Activated CD4-positive, alpha-beta T cell treated with anti-CD3 and anti-CD28 coated beads for 36 hours (primary cell): ENCODE measurements at regions of chr7 and their contacts with region 1.

Region 1: GRCh38 chr7:143214789-143215679 is 6.8 kb upstream of the TAS2R40 start:
- DNase-seq: peak; percentile 70
- ATAC-seq: peak; percentile 89
- H3K4me3 Mint-ChIP-seq: no peak overlapping the region
- H3K27ac Mint-ChIP-seq: no peak overlapping the region
- H3K4me1 Mint-ChIP-seq: no peaks in the 10 kb centered on the region
- H3K27me3 Mint-ChIP-seq: peaks cover 2% of the 10 kb centered on the region

Region 2: DNA sequence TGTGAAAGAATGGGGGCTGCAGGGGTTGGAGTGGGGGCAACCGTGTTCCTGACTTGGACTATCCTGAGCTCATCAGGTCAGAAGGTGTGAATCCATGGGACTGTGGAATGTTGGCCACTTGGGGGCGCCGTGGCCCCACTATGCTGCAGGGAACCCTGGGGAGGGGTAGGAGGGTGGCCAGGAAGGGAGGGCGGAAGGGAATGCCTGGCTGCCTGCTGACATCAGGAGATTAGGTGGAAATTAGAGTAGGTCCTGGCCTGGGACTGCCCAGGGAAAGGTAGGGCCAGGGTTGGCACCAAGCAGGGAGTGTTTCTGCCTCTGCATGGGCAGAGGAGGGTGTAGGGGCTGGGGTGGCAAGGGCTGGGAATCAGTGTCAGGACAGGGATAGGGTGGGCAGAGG is 891.3 kb before region 1 on chr7:
- CTCF ChIA-PET with region 1: no interaction called
- POLR2A ChIA-PET with region 1: no interaction called
- intact Hi-C with region 1: loop called in 1 of 2 experiments (anchors 10 kb)
- DNase-seq: peak; percentile 73
- ATAC-seq: peak; percentile 56
- H3K4me3 Mint-ChIP-seq: peak overlapping the region; percentile 6
- H3K27ac Mint-ChIP-seq: no peak overlapping the region
- H3K4me1 Mint-ChIP-seq: peaks cover 25% of the 10 kb centered on the region
- H3K27me3 Mint-ChIP-seq: peaks cover 2% of the 10 kb centered on the region

Region 3: GRCh38 chr7:142603870-142604448 is 611.1 kb before region 1 on chr7:
- CTCF ChIA-PET with region 1: interaction called, 9 read pairs
- POLR2A ChIA-PET with region 1: no interaction called
- intact Hi-C with region 1: loop called (anchors 10 kb)
- DNase-seq: peak; percentile 69
- ATAC-seq: peak; percentile 60
- H3K4me3 Mint-ChIP-seq: peak overlapping the region; percentile 31
- H3K27ac Mint-ChIP-seq: peak overlapping the region; percentile 67
- H3K4me1 Mint-ChIP-seq: peaks cover 23% of the 10 kb centered on the region
- H3K27me3 Mint-ChIP-seq: peaks cover 3% of the 10 kb centered on the region

Region 4: GRCh38 chr7:142873281-142873787 is 341.7 kb before region 1 on chr7:
- CTCF ChIA-PET with region 1: interaction called, 11 read pairs
- POLR2A ChIA-PET with region 1: no interaction called
- intact Hi-C with region 1: loop called in 1 of 2 experiments (anchors 2 kb)
- DNase-seq: peak; percentile 68
- ATAC-seq: peak; percentile 77
- H3K4me3 Mint-ChIP-seq: no peak overlapping the region
- H3K27ac Mint-ChIP-seq: no peak overlapping the region
- H3K4me1 Mint-ChIP-seq: no peaks in the 10 kb centered on the region
- H3K27me3 Mint-ChIP-seq: no peaks in the 10 kb centered on the region

Region 5: DNA sequence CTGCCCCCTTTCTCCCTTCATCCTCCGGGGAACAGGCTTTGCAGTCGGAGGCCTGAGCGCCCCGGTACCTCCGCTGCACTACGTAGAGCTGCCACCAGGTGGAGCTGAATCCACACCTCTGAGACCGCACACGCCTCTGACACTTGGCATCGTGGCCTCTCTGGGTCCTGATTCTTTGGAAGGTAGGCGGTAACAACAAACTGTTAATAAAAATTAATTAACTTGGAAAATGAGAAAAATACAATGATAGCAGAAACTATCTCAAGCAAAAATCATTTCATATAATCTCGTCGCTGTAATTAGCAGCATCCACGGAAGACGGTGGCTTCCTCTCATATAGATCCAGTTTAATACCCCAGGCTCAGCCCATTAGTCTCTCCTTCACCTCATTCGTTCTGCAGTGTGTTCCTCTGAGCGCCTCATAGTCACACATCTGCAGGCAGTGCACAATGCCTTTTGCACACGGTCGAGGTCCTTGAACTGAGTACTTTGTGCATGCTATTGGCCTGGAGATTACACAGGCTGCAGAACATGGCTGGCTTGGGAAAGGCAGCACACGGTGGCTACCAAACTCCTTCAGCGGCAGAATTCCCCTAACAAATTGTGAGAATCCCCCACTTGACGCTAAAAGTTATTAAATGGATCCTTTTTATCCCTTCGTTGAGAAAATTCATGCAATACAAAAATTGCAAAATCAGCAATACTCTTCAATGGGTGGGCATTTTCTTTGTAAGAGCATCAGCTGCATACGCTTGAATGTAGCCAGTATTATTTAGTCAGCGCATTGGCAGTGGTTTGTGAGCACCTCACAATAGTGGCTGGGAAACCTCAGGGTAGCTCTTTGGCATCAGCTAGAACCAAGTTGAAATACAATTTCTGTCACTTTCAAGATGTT is 206.8 kb before region 1 on chr7:
- CTCF ChIA-PET with region 1: interaction called, 247 read pairs
- POLR2A ChIA-PET with region 1: no interaction called
- intact Hi-C with region 1: loop called (anchors 1 kb)
- DNase-seq: peak; percentile 89
- ATAC-seq: peak; percentile 91
- H3K4me3 Mint-ChIP-seq: no peak overlapping the region
- H3K27ac Mint-ChIP-seq: no peak overlapping the region
- H3K4me1 Mint-ChIP-seq: peaks cover 3% of the 10 kb centered on the region
- H3K27me3 Mint-ChIP-seq: peaks cover 4% of the 10 kb centered on the region